Activated B cell treated with CpG ODN at 0.5 μM for 24 hours (primary cell): ENCODE measurements at regions of chr15 and their contacts with region 1.

Region 1: GRCh38 chr15:85443593-85444087 is 63.2 kb downstream of the AKAP13 start:
- DNase-seq: no peak
- ATAC-seq: peak; percentile 73
- H3K4me3 Mint-ChIP-seq: peak overlapping the region; percentile 50
- H3K27ac Mint-ChIP-seq: peak overlapping the region; percentile 77
- H3K4me1 Mint-ChIP-seq: peaks cover 72% of the 10 kb centered on the region
- H3K27me3 Mint-ChIP-seq: no peaks in the 10 kb centered on the region
- CTCF ChIP-seq: no peak

Region 2: GRCh38 chr15:85337425-85338074 is 106.1 kb before region 1 on chr15:
- CTCF ChIA-PET with region 1: no interaction called
- POLR2A ChIA-PET with region 1: no interaction called
- intact Hi-C with region 1: no loop called
- DNase-seq: no peak
- ATAC-seq: no peak
- H3K4me3 Mint-ChIP-seq: no peak overlapping the region
- H3K27ac Mint-ChIP-seq: no peak overlapping the region
- H3K4me1 Mint-ChIP-seq: peaks cover 11% of the 10 kb centered on the region
- H3K27me3 Mint-ChIP-seq: no peaks in the 10 kb centered on the region
- CTCF ChIP-seq: no peak

Region 3: GRCh38 chr15:85402195-85402881 is 41.3 kb before region 1 on chr15:
- CTCF ChIA-PET with region 1: no interaction called
- POLR2A ChIA-PET with region 1: interaction called, 10 read pairs
- intact Hi-C with region 1: no loop called
- DNase-seq: no peak
- ATAC-seq: no peak
- H3K4me3 Mint-ChIP-seq: peak overlapping the region; percentile 12
- H3K27ac Mint-ChIP-seq: peak overlapping the region; percentile 89
- H3K4me1 Mint-ChIP-seq: peaks cover 89% of the 10 kb centered on the region
- H3K27me3 Mint-ChIP-seq: no peaks in the 10 kb centered on the region
- CTCF ChIP-seq: no peak

Region 4: GRCh38 chr15:85427286-85428028 is 16.2 kb before region 1 on chr15:
- CTCF ChIA-PET with region 1: no interaction called
- POLR2A ChIA-PET with region 1: no interaction called
- intact Hi-C with region 1: loop called (anchors 2 kb)
- DNase-seq: no peak
- ATAC-seq: no peak
- H3K4me3 Mint-ChIP-seq: no peak overlapping the region
- H3K27ac Mint-ChIP-seq: no peak overlapping the region
- H3K4me1 Mint-ChIP-seq: peaks cover 83% of the 10 kb centered on the region
- H3K27me3 Mint-ChIP-seq: no peaks in the 10 kb centered on the region
- CTCF ChIP-seq: no peak

Region 5: GRCh38 chr15:85456798-85457197 is 13.2 kb after region 1 on chr15:
- CTCF ChIA-PET with region 1: no interaction called
- POLR2A ChIA-PET with region 1: interaction called, 5 read pairs
- intact Hi-C with region 1: loop called (anchors 1 kb)
- DNase-seq: no peak
- ATAC-seq: peak; percentile 69
- H3K4me3 Mint-ChIP-seq: no peak overlapping the region
- H3K27ac Mint-ChIP-seq: peak overlapping the region; percentile 88
- H3K4me1 Mint-ChIP-seq: peaks cover 90% of the 10 kb centered on the region
- H3K27me3 Mint-ChIP-seq: no peaks in the 10 kb centered on the region
- CTCF ChIP-seq: no peak